CD14-positive monocyte (primary cell): ENCODE measurements at regions of chr7 and their contacts with region 1.

Region 1: DNA sequence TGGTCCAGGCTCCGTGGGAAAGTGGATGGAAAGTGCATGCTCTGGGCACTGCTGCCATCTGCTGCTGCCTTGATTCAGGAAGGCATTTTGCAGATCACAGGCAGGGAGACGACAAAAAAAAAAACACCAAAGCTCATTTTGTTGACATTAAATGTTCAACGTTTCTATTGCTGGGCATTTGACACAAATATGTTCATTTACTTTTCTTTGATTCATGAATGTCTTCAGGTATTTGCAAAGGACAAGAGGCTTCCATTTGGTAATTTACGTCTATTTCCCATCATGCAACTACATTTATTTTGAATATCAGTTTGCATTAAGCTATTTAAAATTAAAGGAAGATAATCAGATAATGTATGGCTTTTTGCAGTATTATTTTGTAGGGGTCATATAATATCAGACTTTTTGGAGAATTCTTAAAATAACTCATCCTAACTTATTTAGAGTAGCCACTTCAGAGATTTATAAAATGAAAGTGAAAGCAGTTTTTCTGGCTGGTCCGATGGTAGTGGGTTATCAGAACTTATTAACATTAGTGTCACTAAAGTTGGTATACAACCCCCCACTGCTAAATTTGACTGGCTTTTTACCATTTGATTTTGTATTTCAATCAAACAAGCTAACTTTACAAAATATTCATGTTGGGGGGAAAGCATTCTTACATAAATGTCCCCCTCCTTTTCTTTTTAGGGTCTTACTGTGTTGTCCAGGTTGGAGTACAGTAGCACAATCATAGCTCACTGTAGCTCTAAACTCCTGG is 65.3 kb downstream of the PDIA4 start:
- DNase-seq: peak; percentile 55 to 66 (median 61)
- H3K4me3 ChIP-seq: peak overlapping the region; percentile 87 to 98 (median 93)
- H3K4me3 Mint-ChIP-seq: peak overlapping the region; percentile 87 to 98
- H3K27ac ChIP-seq: peak overlapping the region in 1 of 2 donors; percentile 93
- H3K27ac Mint-ChIP-seq: peak overlapping the region; percentile 65 to 92 (median 89)
- H3K4me1 ChIP-seq: peaks cover 22 to 29% of the 10 kb centered on the region in 2 donors
- H3K4me1 Mint-ChIP-seq: peaks cover 34% of the 10 kb centered on the region
- H3K27me3 ChIP-seq: no peaks in the 10 kb centered on the region
- H3K27me3 Mint-ChIP-seq: peaks cover 0 to 5% (median 0%) of the 10 kb centered on the region in 3 donors
- CTCF ChIP-seq: peak; percentile 80

Region 2: DNA sequence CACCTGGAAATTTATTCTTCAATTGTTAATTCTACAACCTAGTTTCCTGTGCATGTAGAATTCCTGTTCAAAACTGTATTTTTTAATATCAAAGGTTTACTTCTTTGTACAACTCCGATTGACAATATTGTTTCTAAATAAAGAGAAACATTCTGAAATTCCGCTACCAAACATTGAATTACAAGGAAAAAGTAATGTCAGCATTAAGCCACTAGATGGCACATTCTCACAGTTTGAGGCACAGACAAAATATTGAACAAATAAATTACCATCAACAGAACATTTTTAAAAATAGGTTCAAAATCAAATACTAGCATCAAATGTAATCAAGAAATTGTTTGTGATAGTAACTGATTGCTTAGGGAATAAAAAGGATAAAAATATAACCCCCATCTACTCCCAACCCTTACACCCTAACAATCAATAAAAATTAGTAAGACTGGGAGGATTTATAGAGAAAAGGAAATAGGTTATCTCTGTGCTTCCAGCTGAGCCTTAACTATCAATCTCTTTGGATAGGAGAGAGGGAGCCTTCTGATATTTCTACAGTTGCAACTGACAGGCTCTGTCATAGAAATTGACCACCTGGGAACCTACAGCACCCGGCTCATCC is 459.0 kb before region 1 on chr7:
- intact Hi-C with region 1: loop called (anchors 5 kb)
- DNase-seq: peak; percentile 5 to 27 (median 12)
- H3K4me3 ChIP-seq: no peak overlapping the region
- H3K4me3 Mint-ChIP-seq: no peak overlapping the region
- H3K27ac ChIP-seq: no peak overlapping the region
- H3K27ac Mint-ChIP-seq: no peak overlapping the region
- H3K4me1 ChIP-seq: no peaks in the 10 kb centered on the region
- H3K4me1 Mint-ChIP-seq: peaks cover 2% of the 10 kb centered on the region
- H3K27me3 ChIP-seq: peaks cover 2 to 3% of the 10 kb centered on the region in 2 donors
- H3K27me3 Mint-ChIP-seq: peaks cover 14 to 21% (median 16%) of the 10 kb centered on the region in 3 donors
- CTCF ChIP-seq: peak; percentile 79

Region 3: GRCh38 chr7:148773334-148773733 is 189.7 kb before region 1 on chr7:
- intact Hi-C with region 1: no loop called
- DNase-seq: no peak
- H3K4me3 ChIP-seq: no peak overlapping the region
- H3K4me3 Mint-ChIP-seq: no peak overlapping the region
- H3K27ac ChIP-seq: peak overlapping the region in 1 of 2 donors; percentile 33
- H3K27ac Mint-ChIP-seq: peak overlapping the region in 3 of 7 donors; percentile 24 to 42 (median 38)
- H3K4me1 ChIP-seq: no peaks in the 10 kb centered on the region
- H3K4me1 Mint-ChIP-seq: no peaks in the 10 kb centered on the region
- H3K27me3 ChIP-seq: no peaks in the 10 kb centered on the region
- H3K27me3 Mint-ChIP-seq: no peaks in the 10 kb centered on the region
- CTCF ChIP-seq: no peak

Region 4: DNA sequence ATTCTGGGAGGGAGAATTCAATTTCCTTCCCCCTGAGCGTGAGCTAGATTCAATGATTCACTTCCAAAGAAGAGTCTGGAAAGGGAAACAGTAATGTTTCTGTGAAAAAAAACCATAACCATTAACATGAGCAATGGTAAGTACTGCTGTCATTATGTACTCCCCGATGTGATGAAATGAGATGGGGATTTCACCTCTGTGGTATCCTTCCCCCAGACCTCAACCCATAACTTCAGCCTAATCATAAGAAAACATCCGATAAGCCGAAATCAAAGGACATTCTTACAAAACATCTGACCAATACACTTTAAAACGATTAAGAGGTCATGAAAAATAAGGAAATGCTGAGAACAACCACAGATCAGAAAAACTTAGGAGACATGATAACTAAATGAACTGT is 106.1 kb before region 1 on chr7:
- intact Hi-C with region 1: loop called in 1 of 2 experiments (anchors 10 kb)
- DNase-seq: peak in 2 of 3 donors; percentile 19 to 90
- H3K4me3 ChIP-seq: no peak overlapping the region
- H3K4me3 Mint-ChIP-seq: no peak overlapping the region
- H3K27ac ChIP-seq: no peak overlapping the region
- H3K27ac Mint-ChIP-seq: peak overlapping the region in 3 of 7 donors; percentile 25 to 42 (median 36)
- H3K4me1 ChIP-seq: no peaks in the 10 kb centered on the region
- H3K4me1 Mint-ChIP-seq: peaks cover 14% of the 10 kb centered on the region
- H3K27me3 ChIP-seq: no peaks in the 10 kb centered on the region
- H3K27me3 Mint-ChIP-seq: no peaks in the 10 kb centered on the region
- CTCF ChIP-seq: no peak

Region 5: DNA sequence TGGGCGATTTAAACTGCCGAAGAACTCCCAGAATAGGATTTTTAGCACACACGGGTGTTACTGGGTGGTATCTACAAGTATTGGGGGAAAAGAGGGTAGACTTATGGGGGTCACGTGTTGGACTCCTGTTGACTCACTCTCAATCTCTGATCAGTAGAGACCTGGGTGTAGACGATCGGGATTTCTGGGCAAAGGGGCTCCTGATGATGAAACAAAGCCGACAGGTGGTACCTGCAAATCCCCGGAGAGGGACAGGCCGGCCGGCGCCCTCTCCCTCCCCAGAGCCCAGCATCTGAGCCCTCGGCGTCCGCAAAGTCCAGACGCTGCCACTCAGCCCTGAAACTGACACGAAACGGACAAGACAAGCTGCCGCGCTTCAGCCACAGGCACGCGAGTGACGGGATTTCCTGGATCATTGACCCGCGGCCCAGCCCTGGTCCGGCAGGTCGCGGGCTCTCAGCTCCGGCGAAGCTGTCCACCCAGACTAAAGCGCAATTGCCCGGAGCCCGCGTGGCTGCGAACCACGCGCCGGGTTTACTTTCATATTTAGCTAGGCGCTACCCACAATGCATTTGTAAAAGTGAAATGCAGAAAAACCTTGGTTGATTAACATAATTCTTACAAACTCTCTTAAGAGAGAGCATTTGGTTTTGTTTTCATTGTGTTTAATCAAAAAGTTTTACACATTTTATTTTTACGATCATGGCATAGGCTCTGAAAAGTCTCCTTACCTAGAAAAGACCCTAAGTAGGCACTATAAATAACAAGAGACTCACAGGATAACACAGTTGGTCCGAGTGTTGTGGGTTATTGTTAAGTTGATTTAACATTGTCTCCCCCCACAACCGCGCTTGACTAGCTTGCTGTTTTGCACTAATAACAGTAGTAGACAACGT is 22.1 kb before region 1 on chr7:
- intact Hi-C with region 1: loop called in 1 of 2 experiments (anchors 2 kb)
- DNase-seq: peak; percentile 83 to 88 (median 84)
- H3K4me3 ChIP-seq: peak overlapping the region; percentile 60 to 86 (median 76)
- H3K4me3 Mint-ChIP-seq: peak overlapping the region; percentile 93 to 94
- H3K27ac ChIP-seq: peak overlapping the region; percentile 86 to 87
- H3K27ac Mint-ChIP-seq: peak overlapping the region; percentile 87 to 94 (median 92)
- H3K4me1 ChIP-seq: peaks cover 9 to 18% of the 10 kb centered on the region in 2 donors
- H3K4me1 Mint-ChIP-seq: peaks cover 12% of the 10 kb centered on the region
- H3K27me3 ChIP-seq: no peaks in the 10 kb centered on the region
- H3K27me3 Mint-ChIP-seq: peaks cover 0 to 1% (median 0%) of the 10 kb centered on the region in 3 donors
- CTCF ChIP-seq: no peak

Region 6: DNA sequence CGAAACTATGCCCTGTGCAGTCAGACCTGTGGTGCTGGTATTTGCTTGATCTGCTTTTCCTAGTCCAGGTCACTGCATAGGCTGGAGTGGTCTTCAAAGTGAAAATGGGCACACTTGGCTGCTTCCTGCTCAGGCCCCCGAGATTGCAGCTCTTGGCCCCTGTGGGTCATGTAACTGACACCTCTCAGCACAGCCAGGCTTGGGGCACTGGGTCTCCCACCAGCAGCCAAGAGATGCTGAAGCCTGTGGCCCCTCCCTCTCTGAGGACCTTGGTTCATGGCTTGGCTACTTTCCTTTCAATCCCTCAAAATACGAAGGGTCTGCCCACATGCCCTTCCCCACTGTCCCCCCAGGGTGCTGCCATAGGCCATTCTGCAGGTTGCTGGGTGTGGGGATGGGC is 31.6 kb after region 1 on chr7:
- intact Hi-C with region 1: no loop called
- DNase-seq: no peak
- H3K4me3 ChIP-seq: no peak overlapping the region
- H3K4me3 Mint-ChIP-seq: no peak overlapping the region
- H3K27ac ChIP-seq: no peak overlapping the region
- H3K27ac Mint-ChIP-seq: no peak overlapping the region
- H3K4me1 ChIP-seq: no peaks in the 10 kb centered on the region
- H3K4me1 Mint-ChIP-seq: no peaks in the 10 kb centered on the region
- H3K27me3 ChIP-seq: no peaks in the 10 kb centered on the region
- H3K27me3 Mint-ChIP-seq: peaks cover 2 to 3% (median 2%) of the 10 kb centered on the region in 3 donors
- CTCF ChIP-seq: no peak